ENCODE measurements at regions of chr5 and their contacts with region 1.

Region 1: GRCh38 chr5:123460296-123460729 is 37.1 kb upstream of the CEP120 start:
- DNase-seq: peak; percentile 61
- H3K4me3 Mint-ChIP-seq: no peak overlapping the region
- H3K27ac Mint-ChIP-seq: peak overlapping the region; percentile 87
- H3K4me1 Mint-ChIP-seq: peaks cover 17% of the 10 kb centered on the region
- H3K27me3 Mint-ChIP-seq: no peaks in the 10 kb centered on the region

Region 2: GRCh38 chr5:123438902-123439301 is 21.4 kb before region 1 on chr5:
- CTCF ChIA-PET with region 1: interaction called, 4 read pairs
- POLR2A ChIA-PET with region 1: interaction called, 5 read pairs
- intact Hi-C with region 1: loop called (anchors 1 kb)
- DNase-seq: peak; percentile 51
- H3K4me3 Mint-ChIP-seq: no peak overlapping the region
- H3K27ac Mint-ChIP-seq: peak overlapping the region; percentile 67
- H3K4me1 Mint-ChIP-seq: peaks cover 31% of the 10 kb centered on the region
- H3K27me3 Mint-ChIP-seq: no peaks in the 10 kb centered on the region

Measured in activated CD4-positive, alpha-beta memory T cell treated with anti-CD3 and anti-CD28 coated beads for 36 hours (primary cell).